Thyroid gland (tissue), 4 donors: ENCODE measurements at regions of chr10 and their contacts with region 1.

Region 1: GRCh38 chr10:101840741-101841453 is 2.7 kb downstream of the KCNIP2 start:
- DNase-seq: peak; percentile 73 to 81
- H3K4me3 ChIP-seq: peak overlapping the region in 1 of 3 donors; percentile 10
- H3K27ac ChIP-seq: no peak overlapping the region
- H3K4me1 ChIP-seq: peaks cover 25 to 26% of the 10 kb centered on the region in 2 donors
- H3K27me3 ChIP-seq: no peaks in the 10 kb centered on the region
- CTCF ChIP-seq: peak; percentile 69 to 90 (median 84)
- POLR2A ChIP-seq: no peak

Region 2: DNA sequence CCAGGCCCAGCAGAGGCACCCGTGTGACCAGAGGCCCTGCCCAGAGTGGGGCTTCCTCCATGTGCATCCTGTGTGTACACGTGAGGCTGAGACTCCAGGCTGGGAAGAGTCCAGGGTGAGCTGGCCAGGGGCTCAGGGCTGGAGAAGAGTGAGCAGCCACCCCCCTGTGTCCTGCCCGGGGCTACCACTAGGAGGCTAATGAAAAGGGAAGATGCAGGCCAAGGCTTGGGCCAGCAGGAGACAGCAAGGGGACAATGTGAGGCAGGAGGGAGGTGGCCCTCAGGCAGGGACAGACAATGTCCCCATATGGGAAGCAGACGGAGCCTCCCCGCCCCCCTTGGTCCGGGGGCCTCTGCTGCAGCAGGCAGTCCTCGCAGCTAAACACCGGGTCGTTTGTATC is 1203.1 kb before region 1 on chr10:
- intact Hi-C with region 1: no loop called
- DNase-seq: no peak
- H3K4me3 ChIP-seq: no peak overlapping the region
- H3K27ac ChIP-seq: no peak overlapping the region
- H3K4me1 ChIP-seq: no peaks in the 10 kb centered on the region
- H3K27me3 ChIP-seq: no peaks in the 10 kb centered on the region
- CTCF ChIP-seq: no peak
- POLR2A ChIP-seq: no peak

Region 3: GRCh38 chr10:101587725-101588653 is 252.9 kb before region 1 on chr10 and contains the starts of genes DPCD and POLL:
- intact Hi-C with region 1: no loop called
- DNase-seq: peak; percentile 98
- H3K4me3 ChIP-seq: peak within 1 kb of the TSS; percentile 53 to 68 (median 56)
- H3K27ac ChIP-seq: peak within 1 kb of the TSS in 2 of 3 donors; percentile 7 to 50
- H3K4me1 ChIP-seq: peaks cover 16 to 17% of the 10 kb centered on the region in 2 donors
- H3K27me3 ChIP-seq: no peaks in the 10 kb centered on the region
- CTCF ChIP-seq: no peak
- POLR2A ChIP-seq: peak in 1 of 2 donors; percentile 50
- total RNA-seq, gene DPCD: 18.1 to 73.0 (median 37.3) TPM
- total RNA-seq, gene POLL: 26.2 to 34.9 (median 33.1) TPM

Region 4: DNA sequence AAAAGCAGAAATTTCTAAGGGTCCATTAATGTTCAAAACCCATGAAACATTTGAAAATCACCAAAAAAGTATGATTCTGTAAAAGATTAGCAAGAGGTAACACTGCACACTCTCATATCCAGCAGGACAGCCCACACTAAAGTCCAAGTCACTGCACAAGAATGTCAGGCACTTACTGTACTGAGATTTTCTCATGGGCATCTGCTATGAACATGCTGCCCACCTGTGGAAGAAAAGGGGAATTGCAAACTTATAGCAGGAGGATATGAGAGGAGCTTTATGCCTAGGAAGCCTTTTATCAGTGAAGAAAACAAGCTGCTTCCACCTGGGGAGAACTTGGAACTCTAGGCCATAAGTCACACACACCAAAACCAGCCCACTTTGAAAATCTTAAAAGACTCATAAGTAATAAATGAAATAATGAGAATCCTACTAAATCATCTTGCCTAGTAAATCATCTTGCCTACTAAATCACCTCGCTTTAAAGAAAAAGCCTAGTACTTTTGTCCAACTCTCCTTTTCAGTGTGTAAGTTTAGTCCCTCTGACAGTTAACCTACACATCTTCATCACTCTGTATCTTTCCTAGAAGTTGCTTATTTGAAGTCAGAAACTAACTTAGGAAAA is 169.0 kb after region 1 on chr10:
- intact Hi-C with region 1: loop called (anchors 2 kb)
- DNase-seq: peak; percentile 53 to 55
- H3K4me3 ChIP-seq: no peak overlapping the region
- H3K27ac ChIP-seq: no peak overlapping the region
- H3K4me1 ChIP-seq: peaks cover 0 to 3% of the 10 kb centered on the region in 2 donors
- H3K27me3 ChIP-seq: no peaks in the 10 kb centered on the region
- CTCF ChIP-seq: peak; percentile 69 to 98 (median 90)
- POLR2A ChIP-seq: no peak

Region 5: DNA sequence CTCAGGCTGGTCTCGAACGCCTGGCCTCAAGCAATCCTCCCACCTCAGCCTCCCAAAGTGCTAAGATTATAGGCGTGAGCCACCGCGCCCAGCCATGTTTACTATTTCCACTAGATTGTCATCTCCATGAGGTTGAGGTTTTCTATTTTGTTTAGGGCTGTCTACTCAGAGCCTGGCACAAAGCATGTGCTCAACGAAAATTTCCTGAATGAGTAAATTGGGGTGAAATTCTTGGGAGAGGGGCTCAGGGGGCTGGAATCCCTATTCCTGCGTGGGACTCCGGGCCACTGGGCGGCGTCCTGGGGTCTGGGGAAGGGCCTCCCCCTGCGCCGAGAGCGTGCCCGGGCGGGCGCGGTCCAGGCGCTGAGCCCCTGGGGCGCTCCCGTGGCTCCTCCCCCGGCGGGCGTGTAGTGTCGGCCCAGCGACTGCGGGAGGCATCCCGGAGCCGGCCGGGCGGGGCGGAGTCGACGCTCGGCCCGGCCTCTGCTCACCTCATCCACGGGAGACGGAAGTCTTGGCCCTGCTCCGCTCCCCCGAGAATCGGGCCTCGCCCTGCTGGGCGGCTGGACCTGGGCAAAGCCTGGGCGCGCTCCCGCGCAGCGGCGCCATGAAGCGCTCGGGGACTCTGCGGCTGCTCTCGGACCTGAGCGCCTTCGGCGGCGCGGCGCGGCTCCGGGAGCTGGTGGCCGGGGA is 224.1 kb after region 1 on chr10 and contains the start of gene HPS6:
- intact Hi-C with region 1: loop called (anchors 5 kb)
- DNase-seq: peak; percentile 91 to 93
- H3K4me3 ChIP-seq: peak within 1 kb of the TSS; percentile 69 to 96 (median 77)
- H3K27ac ChIP-seq: peak within 1 kb of the TSS; percentile 69 to 92 (median 80)
- H3K4me1 ChIP-seq: peaks cover 10 to 30% of the 10 kb centered on the region in 2 donors
- H3K27me3 ChIP-seq: no peaks in the 10 kb centered on the region
- CTCF ChIP-seq: peak in 2 of 6 experiments; percentile 5 to 19
- POLR2A ChIP-seq: peak in 1 of 2 donors; percentile 84
- total RNA-seq, gene HPS6: 18.7 to 28.5 (median 23.8) TPM

Region 6: DNA sequence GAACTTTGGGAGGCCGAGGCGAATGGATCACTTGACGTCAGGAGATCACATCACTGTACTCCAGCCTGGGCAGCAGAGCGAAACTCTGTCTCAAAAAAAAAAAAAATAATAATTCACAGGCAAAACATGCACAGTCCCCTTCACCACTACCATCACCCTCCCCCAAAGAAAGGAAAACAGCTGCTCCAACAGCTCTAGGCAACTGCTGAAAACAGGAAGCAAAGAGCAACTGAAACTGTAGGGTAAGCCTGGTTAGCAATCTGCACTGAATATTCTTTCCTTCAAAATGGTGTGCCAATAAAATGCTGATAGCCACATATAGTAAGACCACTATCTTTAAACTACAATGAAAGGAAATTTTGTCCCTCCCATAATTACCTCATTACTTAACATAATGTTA is 1340.3 kb after region 1 on chr10:
- intact Hi-C with region 1: no loop called
- DNase-seq: no peak
- H3K4me3 ChIP-seq: no peak overlapping the region
- H3K27ac ChIP-seq: peak overlapping the region; percentile 61 to 99 (median 90)
- H3K4me1 ChIP-seq: peaks cover 53 to 72% of the 10 kb centered on the region in 2 donors
- H3K27me3 ChIP-seq: no peaks in the 10 kb centered on the region
- CTCF ChIP-seq: no peak
- POLR2A ChIP-seq: no peak